ENCODE measurements at regions of chr19 and their contacts with region 1.

Region 1: GRCh38 chr19:45994989-45995714 is at the start of gene CCDC61:
- DNase-seq: peak; percentile 99
- ATAC-seq: peak; percentile 97
- H3K4me3 ChIP-seq: peak within 1 kb of the TSS; percentile 95
- H3K27ac ChIP-seq: no peak within 1 kb of the TSS
- H3K4me1 ChIP-seq: no peaks in the 10 kb centered on the region; the same call in 1 of the 2 replicates
- H3K27me3 ChIP-seq: no peaks in the 10 kb centered on the region
- CTCF ChIP-seq: no peak
- total RNA-seq, gene CCDC61: 6.3 and 7.7 TPM in 2 replicates

Region 2: GRCh38 chr19:45927565-45928261 is 67.4 kb before region 1 on chr19:
- CTCF ChIA-PET with region 1: no interaction called
- POLR2A ChIA-PET with region 1: no interaction called
- intact Hi-C with region 1: loop called (anchors 10 kb)
- DNase-seq: peak; percentile 95
- ATAC-seq: peak; percentile 99
- H3K4me3 ChIP-seq: peak overlapping the region; percentile 61
- H3K27ac ChIP-seq: no peak overlapping the region
- H3K4me1 ChIP-seq: peaks cover 5% of the 10 kb centered on the region
- H3K27me3 ChIP-seq: no peaks in the 10 kb centered on the region
- CTCF ChIP-seq: peak; percentile 28; the same call in 1 of the 2 replicates

Region 3: DNA sequence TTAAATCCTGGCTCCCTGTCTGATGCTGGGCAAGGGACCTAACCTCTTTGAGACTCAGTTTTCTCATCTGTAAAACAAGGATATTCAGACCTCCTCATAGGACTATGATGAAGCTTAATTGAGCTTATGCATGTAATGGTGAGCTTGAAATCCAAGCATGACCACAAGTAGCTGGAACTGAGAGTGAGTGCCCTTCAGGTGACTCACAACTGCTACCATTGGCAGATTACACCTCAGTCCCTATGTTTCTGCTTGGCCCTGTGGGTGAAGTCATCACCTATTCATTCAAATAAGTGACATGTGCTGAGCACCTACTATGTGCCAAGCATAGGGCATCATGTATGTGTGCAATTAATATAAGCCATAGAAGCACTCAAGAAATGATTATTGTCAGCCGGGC is 47.2 kb before region 1 on chr19:
- CTCF ChIA-PET with region 1: no interaction called
- POLR2A ChIA-PET with region 1: no interaction called
- intact Hi-C with region 1: no loop called
- DNase-seq: peak; percentile 30
- ATAC-seq: no peak
- H3K4me3 ChIP-seq: no peak overlapping the region
- H3K27ac ChIP-seq: no peak overlapping the region
- H3K4me1 ChIP-seq: no peaks in the 10 kb centered on the region
- H3K27me3 ChIP-seq: no peaks in the 10 kb centered on the region
- CTCF ChIP-seq: no peak

Measured in PC-3 (cell line).